Heart left ventricle (tissue), 16 donors: ENCODE measurements at regions of chr12 and their contacts with region 1.

Region 1: GRCh38 chr12:7092229-7092985 is at the start of gene C1R:
- DNase-seq: peak; percentile 66 to 85 (median 74)
- ATAC-seq: peak; percentile 78 to 80 (median 80)
- H3K4me3 ChIP-seq: peak within 1 kb of the TSS; percentile 1 to 69 (median 55)
- H3K27ac ChIP-seq: peak within 1 kb of the TSS; percentile 41 to 86 (median 72)
- H3K4me1 ChIP-seq: peaks cover 0 to 29% (median 7%) of the 10 kb centered on the region in 12 donors
- H3K27me3 ChIP-seq: no peaks in the 10 kb centered on the region
- CTCF ChIP-seq: peak; percentile 81 to 94 (median 89)
- POLR2A ChIP-seq: no peak
- total RNA-seq, gene C1R: 42.6 to 343 (median 107) TPM

Region 2: DNA sequence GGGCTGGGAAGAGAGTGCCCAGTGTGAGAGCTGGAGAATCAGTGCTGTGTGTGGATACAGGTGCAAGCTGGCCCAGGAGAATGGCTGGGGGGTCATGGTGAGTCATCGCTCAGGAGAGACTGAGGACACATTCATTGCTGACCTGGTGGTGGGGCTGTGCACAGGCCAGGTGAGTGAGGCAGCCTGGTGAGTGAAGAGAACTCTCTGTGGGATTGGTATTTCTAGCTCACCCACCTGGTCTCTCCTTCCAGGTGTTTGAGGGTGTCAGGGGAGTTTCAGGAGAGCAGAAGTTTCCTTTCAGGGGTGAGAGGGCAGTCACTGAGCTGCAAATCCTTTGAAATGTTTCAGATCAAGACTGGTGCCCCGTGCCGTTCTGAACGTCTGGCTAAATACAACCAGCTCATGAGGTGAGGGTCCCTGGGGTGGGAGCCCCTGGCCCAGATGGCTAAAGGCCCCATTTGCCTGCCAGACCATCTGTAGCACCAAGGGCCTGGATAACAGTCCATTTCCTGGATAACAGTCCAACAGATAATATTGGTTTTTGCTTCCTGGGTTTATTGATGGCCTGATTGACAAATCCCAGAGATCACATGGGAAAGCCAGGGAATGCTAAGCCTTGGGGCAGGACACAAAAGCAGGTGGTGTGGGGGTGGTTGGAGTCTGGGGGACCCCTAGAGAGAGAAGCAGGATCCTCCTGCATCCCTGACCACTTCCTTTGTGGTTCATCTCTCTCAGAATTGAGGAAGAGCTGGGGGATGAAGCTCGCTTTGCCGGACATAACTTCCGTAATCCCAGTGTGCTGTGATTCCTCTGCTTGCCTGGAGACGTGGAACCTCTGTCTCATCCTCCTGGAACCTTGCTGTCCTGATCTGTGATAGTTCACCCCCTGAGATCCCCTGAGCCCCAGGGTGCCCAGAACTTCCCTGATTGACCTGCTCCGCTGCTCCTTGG is 170.1 kb before region 1 on chr12:
- intact Hi-C with region 1: loop called in 3 of 10 experiments (anchors 1 to 5 kb)
- DNase-seq: peak in 1 of 5 donors; percentile 18
- ATAC-seq: no peak
- H3K4me3 ChIP-seq: no peak overlapping the region
- H3K27ac ChIP-seq: no peak overlapping the region
- H3K4me1 ChIP-seq: peaks cover 4 to 52% (median 32%) of the 10 kb centered on the region in 12 donors
- H3K27me3 ChIP-seq: no peaks in the 10 kb centered on the region
- CTCF ChIP-seq: no peak
- POLR2A ChIP-seq: no peak

Region 3: DNA sequence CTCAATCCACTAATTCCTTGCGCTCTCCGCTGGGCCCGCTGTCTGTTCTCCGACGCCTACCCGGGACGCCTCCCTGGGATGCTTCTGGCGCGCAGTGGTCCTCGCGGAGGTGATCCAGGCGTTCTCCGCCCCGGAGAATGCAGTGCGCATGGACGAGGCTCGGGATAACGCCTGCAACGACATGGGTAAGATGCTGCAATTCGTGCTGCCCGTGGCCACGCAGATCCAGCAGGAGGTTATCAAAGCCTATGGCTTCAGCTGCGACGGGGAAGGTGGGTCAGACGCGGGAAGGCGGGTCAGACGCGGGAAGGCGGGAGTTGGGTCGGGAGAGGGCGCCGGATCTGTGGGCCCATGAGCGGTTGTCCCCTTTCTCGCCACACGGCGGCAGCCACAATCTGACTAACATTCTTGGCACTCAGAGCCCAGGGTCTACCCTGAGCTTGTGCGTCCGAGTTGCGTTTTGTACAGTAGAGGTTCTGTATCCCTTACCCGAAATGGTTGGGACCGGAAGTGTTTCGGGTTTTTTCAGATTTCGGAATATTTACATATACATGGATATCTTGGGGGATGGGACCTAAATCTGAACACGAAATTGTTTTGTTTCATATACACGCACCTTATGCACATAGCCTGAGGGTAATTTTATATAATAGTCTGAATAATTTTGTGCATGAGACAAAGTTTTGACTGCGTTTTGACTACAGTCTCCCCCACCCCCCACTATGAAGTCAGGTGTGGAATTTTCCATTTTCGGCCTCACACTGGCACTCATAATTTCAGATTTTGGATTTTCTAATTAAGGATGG is 147.8 kb before region 1 on chr12:
- intact Hi-C with region 1: loop called in 7 of 10 experiments (anchors 2 to 10 kb)
- DNase-seq: peak; percentile 94 to 96 (median 95)
- ATAC-seq: peak; percentile 70 to 78 (median 72)
- H3K4me3 ChIP-seq: peak overlapping the region; percentile 52 to 86 (median 78)
- H3K27ac ChIP-seq: peak overlapping the region; percentile 91 to 100 (median 98)
- H3K4me1 ChIP-seq: peaks cover 0 to 64% (median 30%) of the 10 kb centered on the region in 12 donors
- H3K27me3 ChIP-seq: no peaks in the 10 kb centered on the region
- CTCF ChIP-seq: peak; percentile 68 to 96 (median 86)
- POLR2A ChIP-seq: peak in 1 of 2 donors; percentile 28

Region 4: GRCh38 chr12:6978609-6979011 is 113.8 kb before region 1 on chr12:
- intact Hi-C with region 1: no loop called
- DNase-seq: peak in 1 of 5 donors; percentile 19
- ATAC-seq: peak; percentile 29 to 64 (median 40)
- H3K4me3 ChIP-seq: no peak overlapping the region
- H3K27ac ChIP-seq: peak overlapping the region in 11 of 12 donors; percentile 37 to 83 (median 55)
- H3K4me1 ChIP-seq: peaks cover 0 to 17% (median 0%) of the 10 kb centered on the region in 12 donors
- H3K27me3 ChIP-seq: no peaks in the 10 kb centered on the region
- CTCF ChIP-seq: no peak
- POLR2A ChIP-seq: no peak

Region 5: DNA sequence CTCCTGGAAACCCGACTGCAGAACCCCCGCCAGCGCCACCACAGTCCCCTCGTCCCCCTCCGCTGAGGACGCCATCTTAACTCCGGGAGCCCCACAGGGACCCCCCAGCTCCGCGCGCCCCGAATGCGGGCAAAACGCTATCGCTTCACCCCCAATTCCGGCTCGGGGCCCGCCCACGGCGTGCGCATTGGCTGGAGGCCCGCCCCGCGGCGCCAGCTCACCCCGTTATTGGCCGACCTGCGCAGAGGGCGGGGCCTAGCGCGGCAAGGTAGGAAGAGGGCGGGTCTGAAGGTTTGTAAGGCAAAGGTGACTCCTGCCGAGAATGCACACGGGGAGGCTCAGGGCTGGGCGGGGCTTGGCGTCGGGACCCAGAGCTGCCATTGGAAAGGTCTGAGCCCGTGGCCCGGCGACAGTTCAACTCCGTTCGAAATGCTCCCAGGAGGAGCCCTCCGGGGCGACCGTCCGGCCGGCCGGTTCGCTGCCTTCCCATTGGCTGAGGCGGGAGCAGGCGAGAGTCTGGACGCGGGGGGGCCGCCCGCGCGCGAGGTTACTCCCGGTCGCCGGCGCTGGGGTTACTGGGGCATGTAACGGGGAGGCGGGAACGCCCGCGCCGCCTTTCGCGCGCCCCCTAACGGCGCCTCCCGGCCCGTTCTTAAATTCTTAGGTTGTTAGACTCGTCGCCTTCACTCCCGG is 73.9 kb before region 1 on chr12 and contains the start of gene LPCAT3:
- intact Hi-C with region 1: loop called in 1 of 10 experiments (anchors 2 kb)
- DNase-seq: peak; percentile 97 to 99 (median 98)
- ATAC-seq: peak; percentile 96 to 97 (median 96)
- H3K4me3 ChIP-seq: peak within 1 kb of the TSS; percentile 53 to 96 (median 78)
- H3K27ac ChIP-seq: peak within 1 kb of the TSS; percentile 48 to 96 (median 94)
- H3K4me1 ChIP-seq: peaks cover 0 to 38% (median 19%) of the 10 kb centered on the region in 12 donors
- H3K27me3 ChIP-seq: no peaks in the 10 kb centered on the region
- CTCF ChIP-seq: peak; percentile 84 to 96 (median 91)
- POLR2A ChIP-seq: peak in 1 of 2 donors; percentile 76
- total RNA-seq, gene LPCAT3: 19.9 to 66.3 (median 46.8) TPM

Region 6: GRCh38 chr12:7060353-7060954 is 32.0 kb before region 1 on chr12 and contains the start of gene C1S:
- intact Hi-C with region 1: loop called in 8 of 10 experiments (anchors 1 to 5 kb)
- DNase-seq: peak; percentile 69 to 74 (median 71)
- ATAC-seq: peak; percentile 92 to 98 (median 98)
- H3K4me3 ChIP-seq: peak within 1 kb of the TSS in 10 of 12 donors; percentile 37 to 59 (median 42)
- H3K27ac ChIP-seq: peak within 1 kb of the TSS; percentile 54 to 82 (median 72)
- H3K4me1 ChIP-seq: peaks cover 0 to 34% (median 6%) of the 10 kb centered on the region in 12 donors
- H3K27me3 ChIP-seq: peaks cover 0 to 6% (median 0%) of the 10 kb centered on the region in 9 donors
- CTCF ChIP-seq: peak; percentile 51 to 90 (median 78)
- POLR2A ChIP-seq: peak in 1 of 2 donors; percentile 39
- total RNA-seq, gene C1S: 31.9 to 247 (median 74.2) TPM

Region 7: GRCh38 chr12:7108796-7109571 is 16.6 kb after region 1 on chr12 and contains the start of gene C1RL:
- intact Hi-C with region 1: loop called in 1 of 10 experiments (anchors 2 kb)
- DNase-seq: peak; percentile 86 to 94 (median 90)
- ATAC-seq: peak; percentile 85 to 88 (median 86)
- H3K4me3 ChIP-seq: peak within 1 kb of the TSS; percentile 31 to 76 (median 60)
- H3K27ac ChIP-seq: peak within 1 kb of the TSS; percentile 75 to 94 (median 91)
- H3K4me1 ChIP-seq: peaks cover 0 to 41% (median 10%) of the 10 kb centered on the region in 12 donors
- H3K27me3 ChIP-seq: no peaks in the 10 kb centered on the region
- CTCF ChIP-seq: peak; percentile 92 to 99 (median 97)
- POLR2A ChIP-seq: peak in 1 of 2 donors; percentile 8
- total RNA-seq, gene C1RL: 5.4 to 27.1 (median 7.9) TPM

Region 8: DNA sequence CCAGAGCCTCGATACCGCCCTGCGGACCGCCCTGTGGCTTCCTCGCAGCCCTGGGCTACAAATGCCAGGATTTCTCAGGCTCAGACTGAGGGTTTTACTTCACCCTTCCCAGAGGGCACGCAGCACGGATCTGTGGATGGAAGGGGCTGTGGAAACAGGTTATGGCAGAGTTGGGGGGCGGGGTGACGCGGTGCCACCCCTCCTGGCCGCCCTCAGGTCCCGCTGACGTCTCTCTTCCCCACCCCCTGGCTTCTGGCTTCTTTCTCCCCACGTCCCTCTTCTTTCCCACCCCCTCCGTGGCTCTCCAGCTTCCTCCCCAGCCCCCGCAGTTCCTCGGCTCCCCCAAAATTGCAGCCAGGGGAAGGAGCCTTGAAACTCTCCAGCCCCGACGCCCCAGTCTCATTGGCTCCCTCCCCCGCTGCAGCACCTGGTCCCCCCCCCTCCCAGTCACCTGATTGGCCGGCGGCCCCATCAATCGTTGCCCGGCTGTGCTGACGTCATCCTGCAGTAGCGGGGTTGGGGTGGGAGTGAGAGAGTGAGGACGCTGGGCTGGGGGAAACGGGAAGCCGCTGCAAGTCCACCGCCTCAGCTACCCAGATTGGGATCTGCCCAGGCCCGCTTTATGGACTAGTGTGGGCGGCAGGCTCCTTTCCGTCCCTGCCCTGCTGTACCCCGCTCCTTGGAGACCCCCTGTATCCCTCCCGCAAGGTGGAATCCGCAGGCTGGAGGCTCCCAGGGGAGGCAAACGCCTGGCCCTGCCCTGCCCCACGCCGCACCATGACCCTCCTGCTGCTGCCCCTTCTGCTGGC is 37.7 kb after region 1 on chr12 and contains the start of gene CLSTN3:
- intact Hi-C with region 1: loop called in 1 of 10 experiments (anchors 1 kb)
- DNase-seq: peak; percentile 81 to 93 (median 89)
- ATAC-seq: peak; percentile 60 to 91 (median 82)
- H3K4me3 ChIP-seq: peak within 1 kb of the TSS; percentile 50 to 78 (median 64)
- H3K27ac ChIP-seq: peak within 1 kb of the TSS in 10 of 12 donors; percentile 6 to 71 (median 48)
- H3K4me1 ChIP-seq: peaks cover 0 to 29% (median 19%) of the 10 kb centered on the region in 12 donors
- H3K27me3 ChIP-seq: peaks cover 0 to 19% (median 0%) of the 10 kb centered on the region in 9 donors
- CTCF ChIP-seq: no peak
- POLR2A ChIP-seq: no peak
- total RNA-seq, gene CLSTN3: 3.3 to 18.7 (median 4.1) TPM